Naive thymus-derived CD8-positive, alpha-beta T cell (primary cell): ENCODE measurements at regions of chr17 and their contacts with region 1.

Region 1: GRCh38 chr17:64399071-64399766 is 8.6 kb upstream of the PECAM1 start:
- DNase-seq: no peak
- ATAC-seq: no peak
- H3K4me3 Mint-ChIP-seq: peak overlapping the region; percentile 32 to 79 (median 48)
- H3K27ac Mint-ChIP-seq: peak overlapping the region; percentile 56 to 99 (median 87)
- H3K4me1 Mint-ChIP-seq: peaks cover 25 to 79% (median 49%) of the 10 kb centered on the region in 4 donors
- H3K27me3 Mint-ChIP-seq: no peaks in the 10 kb centered on the region

Region 2: DNA sequence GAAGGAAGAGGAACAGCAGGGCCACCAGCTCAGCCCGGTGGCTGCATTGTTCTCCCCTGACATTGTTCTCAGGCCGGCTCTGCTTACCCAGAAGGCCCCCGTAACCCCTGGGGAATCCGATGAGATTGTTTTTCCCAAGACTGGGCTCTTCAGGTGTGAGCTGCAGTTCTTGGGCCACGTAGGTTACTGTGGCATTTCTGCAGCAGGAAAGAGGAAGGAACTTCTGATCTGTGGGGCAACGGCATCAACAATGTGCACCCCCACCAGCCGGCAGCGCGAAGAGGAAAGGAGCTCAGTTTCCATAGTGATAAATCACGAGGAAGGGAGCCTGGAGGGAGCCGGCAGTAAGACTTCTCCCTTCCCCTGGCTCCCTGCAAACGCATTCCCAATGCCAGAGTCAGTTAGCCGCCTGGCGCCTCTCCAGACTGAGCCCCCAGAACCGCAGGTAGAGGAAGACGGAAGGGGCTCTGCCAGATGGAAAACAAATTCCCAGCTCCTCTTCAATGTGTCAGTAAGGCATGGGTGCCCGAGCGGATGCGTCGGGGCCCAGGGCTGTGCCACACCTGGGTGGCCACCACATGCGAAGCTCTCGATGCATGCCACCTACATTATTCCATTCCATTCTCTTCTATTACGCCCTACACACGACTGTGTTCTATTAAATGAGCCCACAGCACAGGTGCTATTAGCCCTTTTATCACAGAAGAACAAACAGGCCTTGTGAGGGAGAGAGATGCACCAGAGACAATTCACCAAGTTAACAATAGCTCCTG is 13.0 kb after region 1 on chr17:
- POLR2A ChIA-PET with region 1: interaction called, 39 read pairs
- DNase-seq: peak in 2 of 10 donors; percentile 31 to 68
- ATAC-seq: peak; percentile 54 to 76
- H3K4me3 Mint-ChIP-seq: peak overlapping the region; percentile 63 to 88 (median 80)
- H3K27ac Mint-ChIP-seq: peak overlapping the region; percentile 53 to 91 (median 76)
- H3K4me1 Mint-ChIP-seq: peaks cover 21 to 40% (median 32%) of the 10 kb centered on the region in 4 donors
- H3K27me3 Mint-ChIP-seq: no peaks in the 10 kb centered on the region